ENCODE measurements at regions of chr22 and their contacts with region 1.

Region 1: DNA sequence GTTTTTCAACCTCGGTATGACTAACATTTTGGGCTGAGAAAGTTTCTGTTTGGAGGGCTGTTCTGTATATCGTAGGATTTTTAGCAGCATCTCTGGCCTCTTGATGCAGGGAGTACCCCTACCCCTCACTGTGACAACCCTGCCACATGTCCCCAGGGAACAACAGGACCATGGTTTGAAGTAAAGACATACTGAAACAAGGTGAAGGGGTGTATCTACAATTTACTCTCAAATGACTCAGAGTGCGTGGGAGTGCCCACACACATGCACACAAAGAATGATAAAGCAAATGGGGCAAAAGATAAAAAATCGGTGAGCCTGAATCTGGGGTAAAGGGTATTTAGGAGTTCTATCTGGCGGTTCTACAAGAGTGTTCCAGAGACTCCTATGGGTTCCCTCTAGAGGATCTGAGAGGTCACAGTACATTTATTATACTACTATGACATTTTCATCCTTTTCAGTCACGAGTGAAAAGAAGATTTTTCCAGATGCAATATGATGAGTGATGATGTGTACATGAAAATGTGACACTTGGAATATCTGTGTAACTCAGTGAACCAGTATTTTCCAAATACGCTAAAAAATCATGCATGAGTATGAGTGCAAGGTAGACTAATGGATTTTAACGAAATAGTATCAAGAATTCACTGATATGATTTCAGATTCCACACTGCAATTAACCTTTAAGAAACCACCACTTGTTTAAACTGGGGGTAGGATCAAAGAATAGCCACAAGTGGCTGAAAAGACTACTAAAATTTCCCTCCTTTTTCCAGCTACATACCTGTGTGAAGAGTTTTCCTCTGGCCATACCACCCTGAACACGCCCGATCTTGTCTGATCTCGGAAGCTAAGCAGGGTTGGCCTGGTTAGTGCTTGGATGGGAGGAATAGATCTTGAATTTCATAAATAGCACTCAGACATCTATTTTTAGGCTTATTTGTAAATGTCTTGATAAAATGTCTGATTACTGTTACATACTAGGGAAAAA is 56.3 kb upstream of the YPEL1 start:
- DNase-seq: peak; percentile 90 to 99 (median 95)
- ATAC-seq: peak; percentile 86
- H3K4me3 ChIP-seq: no peak overlapping the region
- H3K27ac ChIP-seq: peak overlapping the region; percentile 10; the same call in 2 of the 3 replicates
- H3K4me1 ChIP-seq: peaks cover 0 to 11% of the 10 kb centered on the region in 2 experiments; a peak in 3 of 5 replicates
- H3K27me3 ChIP-seq: no peaks in the 10 kb centered on the region
- CTCF ChIP-seq: peak in 1 of 3 experiments; percentile 83; a peak in 2 of 6 replicates
- EP300 ChIP-seq: peak; percentile 99
- POLR2A ChIP-seq: no peak
- RAD21 ChIP-seq: no peak

Region 2: DNA sequence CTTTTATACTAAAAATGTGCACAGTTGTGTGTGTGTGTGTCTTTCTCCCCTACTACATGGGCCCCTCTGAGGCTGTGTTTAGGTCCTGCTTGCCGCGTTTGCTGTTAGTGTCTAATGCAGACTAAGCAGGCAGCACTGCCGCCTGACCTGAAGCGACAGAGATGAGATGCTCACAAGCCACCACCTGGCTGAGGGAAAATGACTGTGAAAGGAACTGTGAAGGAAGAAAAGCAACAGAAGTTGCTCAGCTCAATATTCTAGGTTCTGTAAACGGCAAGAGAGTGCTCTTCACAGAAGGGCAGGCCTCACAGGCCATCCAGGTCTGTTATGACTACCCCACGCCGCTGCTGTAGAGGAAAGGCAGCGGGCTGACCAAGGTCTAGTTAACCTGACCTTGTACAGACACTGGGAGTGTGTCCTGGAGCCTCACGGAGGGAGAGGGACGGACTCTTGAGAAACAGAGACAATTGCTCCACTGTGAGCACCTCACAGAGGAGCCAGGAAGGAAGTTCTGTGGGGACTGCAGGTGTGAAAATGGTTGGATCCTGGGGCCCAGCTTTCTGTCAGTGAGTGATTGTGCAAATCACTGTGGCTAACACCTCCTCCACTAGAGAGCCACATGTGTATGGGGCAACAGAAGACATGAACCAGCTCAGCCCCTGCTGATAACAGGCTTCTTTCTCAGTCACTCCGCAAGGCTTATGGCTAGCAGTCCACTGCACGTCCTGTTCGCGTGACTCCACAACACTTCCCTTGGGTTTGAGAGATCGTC is 25.1 kb before region 1 on chr22:
- CTCF ChIA-PET with region 1: no interaction called
- POLR2A ChIA-PET with region 1: interaction called, 16 read pairs
- in situ Hi-C with region 1: no loop called
- intact Hi-C with region 1: no loop called
- DNase-seq: peak in 1 of 4 experiments; percentile 31
- ATAC-seq: peak; percentile 12
- H3K4me3 ChIP-seq: no peak overlapping the region
- H3K27ac ChIP-seq: no peak overlapping the region
- H3K4me1 ChIP-seq: peaks cover 0 to 5% of the 10 kb centered on the region in 2 experiments; a peak in 1 of 5 replicates
- H3K27me3 ChIP-seq: no peaks in the 10 kb centered on the region
- CTCF ChIP-seq: no peak
- EP300 ChIP-seq: no peak
- POLR2A ChIP-seq: no peak
- RAD21 ChIP-seq: no peak

Region 3: GRCh38 chr22:21807544-21808529 is 15.9 kb after region 1 on chr22:
- CTCF ChIA-PET with region 1: no interaction called
- POLR2A ChIA-PET with region 1: interaction called, 22 read pairs
- in situ Hi-C with region 1: no loop called
- intact Hi-C with region 1: no loop called
- DNase-seq: no peak
- ATAC-seq: no peak; the same call in 2 of the 3 replicates
- H3K4me3 ChIP-seq: no peak overlapping the region
- H3K27ac ChIP-seq: no peak overlapping the region
- H3K4me1 ChIP-seq: 0 out of 5 replicates have a peak, but pooled peaks cover 0 to 4% of the 10 kb centered on the region in 2 experiments
- H3K27me3 ChIP-seq: no peaks in the 10 kb centered on the region
- CTCF ChIP-seq: no peak
- EP300 ChIP-seq: no peak
- POLR2A ChIP-seq: no peak
- RAD21 ChIP-seq: no peak

Region 4: DNA sequence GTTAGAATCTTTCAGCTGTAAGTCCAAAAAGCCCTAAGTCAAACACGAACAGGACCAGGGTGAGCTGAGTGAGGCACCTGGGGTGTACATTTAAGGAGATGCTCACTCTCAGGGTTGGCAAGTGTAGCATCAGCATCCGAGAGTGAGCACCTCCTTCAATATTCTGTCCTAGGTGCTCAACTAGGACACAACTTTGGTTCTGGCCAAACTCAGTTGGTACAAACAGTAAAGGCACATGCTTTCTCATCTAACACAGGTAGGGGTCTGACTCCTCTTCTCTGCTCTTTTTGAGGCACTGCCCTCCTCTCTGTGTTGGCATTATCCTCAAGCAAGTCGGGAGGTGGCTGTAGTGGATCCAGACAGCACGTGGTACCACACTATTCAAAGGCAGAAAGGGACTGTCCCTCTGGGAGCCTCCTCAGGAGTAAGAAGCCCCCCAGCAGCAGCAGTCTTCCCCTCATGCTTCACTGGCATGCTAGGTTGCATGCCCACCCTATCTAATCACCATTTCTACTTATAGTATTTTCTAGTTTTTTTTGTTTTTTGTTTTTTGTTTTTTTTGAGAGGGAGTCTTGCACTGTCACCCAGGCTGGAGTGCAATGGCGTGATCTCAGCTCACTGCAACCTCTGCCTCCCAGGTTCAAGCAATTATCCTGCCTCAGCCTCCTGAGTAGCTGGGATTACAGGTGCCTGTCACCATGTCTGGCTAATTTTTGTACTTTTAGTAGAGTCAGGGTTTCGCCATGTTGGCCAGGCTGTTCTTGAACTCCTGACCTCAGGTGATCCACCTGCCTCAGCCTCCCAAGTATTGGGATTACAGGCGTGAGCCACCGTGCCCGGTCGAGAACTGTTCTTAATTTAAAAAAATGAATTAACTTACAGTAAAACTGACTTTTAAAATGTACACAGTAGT is 90.2 kb after region 1 on chr22:
- CTCF ChIA-PET with region 1: no interaction called
- POLR2A ChIA-PET with region 1: no interaction called
- in situ Hi-C with region 1: no loop called
- intact Hi-C with region 1: no loop called
- DNase-seq: peak in 3 of 4 experiments; percentile 41 to 52 (median 46)
- ATAC-seq: peak; percentile 40
- H3K4me3 ChIP-seq: no peak overlapping the region
- H3K27ac ChIP-seq: no peak overlapping the region
- H3K4me1 ChIP-seq: peaks cover 4 to 10% of the 10 kb centered on the region in 2 experiments
- H3K27me3 ChIP-seq: peaks cover 4 to 25% of the 10 kb centered on the region in 2 experiments; a peak in 4 of 5 replicates
- CTCF ChIP-seq: no peak
- EP300 ChIP-seq: no peak
- POLR2A ChIP-seq: no peak
- RAD21 ChIP-seq: no peak

Region 5: GRCh38 chr22:21921729-21922128 is 129.8 kb after region 1 on chr22:
- CTCF ChIA-PET with region 1: no interaction called
- POLR2A ChIA-PET with region 1: no interaction called
- in situ Hi-C with region 1: no loop called
- intact Hi-C with region 1: no loop called
- DNase-seq: no peak
- ATAC-seq: no peak
- H3K4me3 ChIP-seq: no peak overlapping the region
- H3K27ac ChIP-seq: no peak overlapping the region
- H3K4me1 ChIP-seq: peaks cover 0 to 53% of the 10 kb centered on the region in 2 experiments; a peak in 3 of 5 replicates
- H3K27me3 ChIP-seq: no peaks in the 10 kb centered on the region
- CTCF ChIP-seq: no peak
- EP300 ChIP-seq: no peak
- POLR2A ChIP-seq: no peak
- RAD21 ChIP-seq: no peak

Region 6: DNA sequence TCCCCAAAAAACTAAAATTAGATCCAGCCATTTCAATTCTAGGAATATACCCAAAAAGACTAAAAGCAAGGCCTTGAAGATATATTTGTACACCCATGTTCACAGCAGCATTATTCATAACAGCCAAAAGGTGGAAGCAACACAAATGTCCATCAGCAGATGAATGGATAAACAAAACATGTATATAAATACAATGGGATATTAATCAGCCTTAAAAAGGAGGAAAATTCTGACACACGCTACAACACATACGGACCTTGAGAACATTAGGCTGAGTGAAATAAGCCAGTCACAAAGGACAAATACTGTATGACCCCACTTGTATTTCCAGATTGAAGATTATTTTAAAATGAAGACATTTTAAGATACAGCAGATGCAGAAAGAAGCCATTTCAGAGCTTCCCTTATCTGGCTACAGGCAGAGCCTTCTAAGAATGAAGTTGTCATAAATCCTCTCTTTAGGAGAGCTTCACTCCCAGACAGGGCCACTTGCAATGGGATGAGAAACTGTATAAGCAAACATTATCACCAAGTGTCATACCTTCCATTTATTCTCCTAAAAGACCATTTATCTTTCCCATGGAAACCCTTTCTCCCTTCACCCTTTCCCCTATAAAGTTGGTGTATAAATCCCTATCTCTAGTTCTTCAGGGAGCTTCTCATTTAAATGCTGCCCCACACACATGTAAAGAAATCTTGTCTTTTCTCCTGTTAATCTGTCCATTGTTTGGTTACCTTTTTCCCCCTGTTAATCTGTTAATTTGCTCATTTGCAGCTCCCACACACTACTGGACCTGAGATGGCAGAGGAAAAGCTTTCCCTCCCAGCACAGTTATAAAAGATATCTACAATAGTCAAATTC is 210.0 kb after region 1 on chr22:
- CTCF ChIA-PET with region 1: no interaction called
- POLR2A ChIA-PET with region 1: no interaction called
- in situ Hi-C with region 1: no loop called
- intact Hi-C with region 1: no loop called
- DNase-seq: peak in 2 of 4 experiments; percentile 82 to 89
- ATAC-seq: peak; percentile 84
- H3K4me3 ChIP-seq: no peak overlapping the region
- H3K27ac ChIP-seq: peak overlapping the region; percentile 12; the same call in 1 of the 3 replicates
- H3K4me1 ChIP-seq: peaks cover 11 to 29% of the 10 kb centered on the region in 2 experiments
- H3K27me3 ChIP-seq: peaks cover 0 to 6% of the 10 kb centered on the region in 2 experiments; a peak in 3 of 5 replicates
- CTCF ChIP-seq: no peak
- EP300 ChIP-seq: no peak
- POLR2A ChIP-seq: no peak
- RAD21 ChIP-seq: no peak